PC-3 (cell line): ENCODE measurements at regions of chr6 and their contacts with region 1.

Region 1: GRCh38 chr6:147194652-147195411 is 9.4 kb upstream of the STXBP5 start:
- DNase-seq: peak; percentile 76
- ATAC-seq: peak; percentile 90
- H3K4me3 ChIP-seq: no peak overlapping the region
- H3K27ac ChIP-seq: peak overlapping the region; percentile 90
- H3K4me1 ChIP-seq: peaks cover 30% of the 10 kb centered on the region
- H3K27me3 ChIP-seq: no peaks in the 10 kb centered on the region
- CTCF ChIP-seq: no peak

Region 2: GRCh38 chr6:146990821-146991798 is 203.7 kb before region 1 on chr6:
- CTCF ChIA-PET with region 1: no interaction called
- POLR2A ChIA-PET with region 1: no interaction called
- intact Hi-C with region 1: no loop called
- DNase-seq: peak; percentile 67
- ATAC-seq: peak; percentile 67
- H3K4me3 ChIP-seq: no peak overlapping the region
- H3K27ac ChIP-seq: 0 out of 2 replicates have a peak overlapping the region, but pooled peaks have one; percentile 21
- H3K4me1 ChIP-seq: peaks cover 13% of the 10 kb centered on the region
- H3K27me3 ChIP-seq: no peaks in the 10 kb centered on the region
- CTCF ChIP-seq: no peak

Region 3: DNA sequence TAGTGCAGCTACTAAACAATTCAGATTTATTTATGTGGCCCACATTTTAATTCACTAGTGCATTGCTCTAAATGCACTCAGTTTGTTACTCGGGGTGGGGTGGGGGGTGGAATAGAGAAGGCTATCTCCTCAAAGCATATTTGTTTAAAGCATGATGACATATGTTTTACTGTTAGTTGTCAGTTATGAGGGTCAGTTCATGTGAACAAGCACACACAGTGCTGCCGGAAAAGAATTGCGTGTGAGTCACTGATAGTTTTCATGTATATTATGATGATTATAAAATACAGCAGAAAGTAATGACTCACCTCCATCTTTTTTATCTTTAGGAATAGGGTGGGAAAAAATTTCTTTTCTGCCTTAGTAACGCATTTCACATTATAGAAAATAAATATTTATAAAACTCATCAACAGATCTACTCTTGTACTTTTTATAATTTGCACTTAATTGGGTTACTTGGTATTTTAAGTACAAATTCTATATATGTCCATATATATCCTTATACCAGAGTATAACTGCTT is 32.8 kb before region 1 on chr6:
- CTCF ChIA-PET with region 1: no interaction called
- POLR2A ChIA-PET with region 1: interaction called, 3 read pairs
- intact Hi-C with region 1: loop called (anchors 2 kb)
- DNase-seq: peak; percentile 89
- ATAC-seq: peak; percentile 95
- H3K4me3 ChIP-seq: no peak overlapping the region
- H3K27ac ChIP-seq: peak overlapping the region; percentile 95
- H3K4me1 ChIP-seq: peaks cover 26% of the 10 kb centered on the region
- H3K27me3 ChIP-seq: no peaks in the 10 kb centered on the region
- CTCF ChIP-seq: no peak

Region 4: DNA sequence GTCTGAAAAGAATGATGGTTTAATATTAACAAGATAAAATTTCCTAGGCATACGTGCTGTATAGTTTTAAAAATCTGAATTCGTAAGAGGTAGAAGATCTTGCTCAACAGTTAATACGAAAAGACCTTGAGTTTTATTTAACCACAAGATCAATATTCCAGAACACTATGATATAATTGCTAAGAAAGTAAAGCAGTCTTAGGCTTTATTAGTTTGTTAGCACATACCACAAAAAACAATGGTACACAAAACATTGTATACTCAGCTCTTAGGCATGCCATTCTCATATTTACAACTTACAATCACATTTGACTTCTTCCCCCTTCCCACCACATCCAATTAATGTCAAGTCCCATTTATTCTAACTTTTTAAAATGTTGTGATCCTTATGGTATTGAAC is 15.0 kb before region 1 on chr6:
- CTCF ChIA-PET with region 1: no interaction called
- POLR2A ChIA-PET with region 1: no interaction called
- intact Hi-C with region 1: loop called (anchors 2 kb)
- DNase-seq: peak; percentile 54
- ATAC-seq: peak; percentile 85
- H3K4me3 ChIP-seq: no peak overlapping the region
- H3K27ac ChIP-seq: peak overlapping the region; percentile 52
- H3K4me1 ChIP-seq: peaks cover 13% of the 10 kb centered on the region
- H3K27me3 ChIP-seq: no peaks in the 10 kb centered on the region
- CTCF ChIP-seq: no peak